B cell (primary cell): ENCODE measurements at regions of chr17 and their contacts with region 1.

Region 1: GRCh38 chr17:67800495-67800928 is 24.8 kb upstream of the BPTF start:
- DNase-seq: peak; percentile 87
- ATAC-seq: peak; percentile 94
- H3K4me3 ChIP-seq: no peak overlapping the region
- H3K4me3 Mint-ChIP-seq: peak overlapping the region; percentile 52
- H3K27ac ChIP-seq: no peak overlapping the region
- H3K27ac Mint-ChIP-seq: peak overlapping the region; percentile 80
- H3K4me1 ChIP-seq: peaks cover 9 to 11% of the 10 kb centered on the region in 2 donors
- H3K4me1 Mint-ChIP-seq: peaks cover 22% of the 10 kb centered on the region
- H3K27me3 ChIP-seq: no peaks in the 10 kb centered on the region
- H3K27me3 Mint-ChIP-seq: peaks cover 3% of the 10 kb centered on the region
- CTCF ChIP-seq: peak; percentile 73

Region 2: GRCh38 chr17:67546578-67547527 is 253.7 kb before region 1 on chr17:
- CTCF ChIA-PET with region 1: no interaction called
- POLR2A ChIA-PET with region 1: no interaction called
- intact Hi-C with region 1: no loop called
- DNase-seq: no peak
- ATAC-seq: no peak
- H3K4me3 ChIP-seq: no peak overlapping the region
- H3K4me3 Mint-ChIP-seq: no peak overlapping the region
- H3K27ac ChIP-seq: no peak overlapping the region
- H3K27ac Mint-ChIP-seq: peak overlapping the region; percentile 4
- H3K4me1 ChIP-seq: peaks cover 0 to 3% of the 10 kb centered on the region in 2 donors
- H3K4me1 Mint-ChIP-seq: peaks cover 15% of the 10 kb centered on the region
- H3K27me3 ChIP-seq: no peaks in the 10 kb centered on the region
- H3K27me3 Mint-ChIP-seq: no peaks in the 10 kb centered on the region
- CTCF ChIP-seq: no peak

Region 3: DNA sequence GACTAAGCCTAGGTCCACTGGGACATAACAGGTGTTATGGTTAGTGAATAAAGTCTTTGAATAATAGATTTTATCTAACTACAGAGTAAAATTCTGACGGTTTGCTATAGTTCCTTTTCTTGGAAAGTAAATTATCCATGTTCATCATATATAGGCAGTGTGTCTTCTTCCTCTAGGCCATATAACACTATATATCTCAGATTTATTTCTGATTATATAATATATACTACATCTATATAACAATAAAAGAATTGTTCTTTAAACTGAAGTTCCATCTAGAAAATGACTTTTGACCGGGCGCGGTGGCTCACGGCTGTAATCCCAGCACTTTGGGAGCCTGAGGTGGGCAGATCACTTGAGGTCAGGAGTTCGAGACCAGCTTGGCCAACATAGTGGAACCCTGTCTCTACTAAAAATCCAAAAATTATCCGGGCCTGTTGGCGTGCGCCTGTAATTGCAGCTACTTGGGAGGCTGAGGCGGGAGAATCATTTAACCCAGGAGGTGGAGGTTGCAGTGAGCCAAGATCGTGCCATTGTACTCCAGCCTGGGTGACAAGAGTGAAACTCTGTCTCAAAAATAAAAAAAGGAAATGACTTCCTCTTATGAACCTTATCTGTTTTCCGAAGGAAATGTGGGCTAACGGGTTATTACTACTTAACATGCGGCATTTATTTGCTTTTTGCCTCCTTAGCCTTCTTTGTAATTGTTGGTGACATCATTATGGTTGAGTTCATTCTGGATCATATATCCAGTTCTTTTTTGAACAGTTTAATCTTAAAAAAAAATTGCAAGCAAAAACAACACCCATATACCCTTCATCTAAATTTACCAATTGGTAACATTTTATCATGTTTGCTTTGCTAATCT is 53.6 kb before region 1 on chr17:
- CTCF ChIA-PET with region 1: no interaction called
- POLR2A ChIA-PET with region 1: no interaction called
- intact Hi-C with region 1: no loop called
- DNase-seq: no peak
- ATAC-seq: no peak
- H3K4me3 ChIP-seq: no peak overlapping the region
- H3K4me3 Mint-ChIP-seq: no peak overlapping the region
- H3K27ac ChIP-seq: peak overlapping the region in 1 of 2 donors; percentile 19
- H3K27ac Mint-ChIP-seq: no peak overlapping the region
- H3K4me1 ChIP-seq: no peaks in the 10 kb centered on the region
- H3K4me1 Mint-ChIP-seq: no peaks in the 10 kb centered on the region
- H3K27me3 ChIP-seq: no peaks in the 10 kb centered on the region
- H3K27me3 Mint-ChIP-seq: no peaks in the 10 kb centered on the region
- CTCF ChIP-seq: no peak

Region 4: GRCh38 chr17:67785504-67785903 is 15.0 kb before region 1 on chr17:
- CTCF ChIA-PET with region 1: no interaction called
- POLR2A ChIA-PET with region 1: no interaction called
- intact Hi-C with region 1: no loop called
- DNase-seq: no peak
- ATAC-seq: no peak
- H3K4me3 ChIP-seq: no peak overlapping the region
- H3K4me3 Mint-ChIP-seq: no peak overlapping the region
- H3K27ac ChIP-seq: no peak overlapping the region
- H3K27ac Mint-ChIP-seq: no peak overlapping the region
- H3K4me1 ChIP-seq: peaks cover 0 to 6% of the 10 kb centered on the region in 2 donors
- H3K4me1 Mint-ChIP-seq: peaks cover 4% of the 10 kb centered on the region
- H3K27me3 ChIP-seq: no peaks in the 10 kb centered on the region
- H3K27me3 Mint-ChIP-seq: peaks cover 4% of the 10 kb centered on the region
- CTCF ChIP-seq: no peak

Region 5: GRCh38 chr17:67818110-67819002 is 17.8 kb after region 1 on chr17:
- CTCF ChIA-PET with region 1: interaction called, 103 read pairs
- POLR2A ChIA-PET with region 1: interaction called, 25 read pairs
- intact Hi-C with region 1: loop called (anchors 1 kb)
- DNase-seq: peak; percentile 93
- ATAC-seq: peak; percentile 60
- H3K4me3 ChIP-seq: peak overlapping the region in 2 of 5 experiments; percentile 10 to 29
- H3K4me3 Mint-ChIP-seq: peak overlapping the region; percentile 73
- H3K27ac ChIP-seq: peak overlapping the region; percentile 71 to 78
- H3K27ac Mint-ChIP-seq: peak overlapping the region; percentile 92
- H3K4me1 ChIP-seq: peaks cover 56 to 73% of the 10 kb centered on the region in 2 donors
- H3K4me1 Mint-ChIP-seq: peaks cover 65% of the 10 kb centered on the region
- H3K27me3 ChIP-seq: no peaks in the 10 kb centered on the region
- H3K27me3 Mint-ChIP-seq: no peaks in the 10 kb centered on the region
- CTCF ChIP-seq: no peak

Region 6: DNA sequence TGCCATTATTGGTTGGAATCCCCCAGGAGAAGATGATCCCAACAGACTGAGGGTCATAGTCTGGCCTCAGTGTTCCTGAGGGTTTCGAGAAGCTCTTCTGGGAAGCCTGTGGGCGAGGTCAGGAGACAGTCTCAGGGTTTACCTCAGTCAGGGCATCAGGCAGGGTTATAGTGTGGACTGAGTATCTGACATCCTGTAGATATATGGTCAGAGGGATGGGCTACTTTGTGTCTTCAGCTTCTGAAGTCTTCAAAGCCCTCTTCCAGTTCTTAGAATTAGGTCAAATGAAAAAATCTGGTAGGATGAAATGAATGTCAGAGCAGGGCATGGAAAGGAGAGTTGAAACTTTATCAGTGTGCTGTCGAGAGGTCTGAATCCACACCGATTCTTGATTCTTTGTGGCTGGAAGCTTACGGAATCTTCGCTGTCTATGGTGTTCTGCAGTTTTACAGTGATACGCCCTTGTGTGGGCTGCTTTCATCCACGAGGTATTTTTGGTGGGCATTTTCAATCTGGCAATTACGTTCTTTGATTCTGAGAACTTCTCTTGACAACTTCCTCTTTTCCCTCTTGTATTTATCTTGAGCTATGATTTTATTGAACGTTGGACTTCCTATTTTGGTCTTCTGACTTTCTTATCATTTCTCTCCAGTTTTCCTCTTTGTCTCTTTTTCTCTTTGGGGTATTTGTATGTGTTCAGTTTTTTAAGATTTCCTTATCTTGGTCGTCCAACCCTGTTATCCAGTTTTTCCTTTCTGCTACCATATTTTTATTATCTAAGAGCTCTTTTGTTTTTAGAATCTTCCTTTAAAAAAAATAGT is 55.2 kb after region 1 on chr17:
- CTCF ChIA-PET with region 1: interaction called, 15 read pairs
- POLR2A ChIA-PET with region 1: interaction called, 6 read pairs
- intact Hi-C with region 1: no loop called
- DNase-seq: peak; percentile 74
- ATAC-seq: peak; percentile 69
- H3K4me3 ChIP-seq: peak overlapping the region in 4 of 5 experiments; percentile 11 to 50 (median 37)
- H3K4me3 Mint-ChIP-seq: peak overlapping the region; percentile 83
- H3K27ac ChIP-seq: peak overlapping the region; percentile 66 to 82
- H3K27ac Mint-ChIP-seq: peak overlapping the region; percentile 90
- H3K4me1 ChIP-seq: peaks cover 25% of the 10 kb centered on the region in 2 donors
- H3K4me1 Mint-ChIP-seq: peaks cover 57% of the 10 kb centered on the region
- H3K27me3 ChIP-seq: no peaks in the 10 kb centered on the region
- H3K27me3 Mint-ChIP-seq: no peaks in the 10 kb centered on the region
- CTCF ChIP-seq: no peak

Region 7: GRCh38 chr17:67862614-67863217 is 62.2 kb after region 1 on chr17:
- CTCF ChIA-PET with region 1: interaction called, 7 read pairs
- POLR2A ChIA-PET with region 1: no interaction called
- intact Hi-C with region 1: loop called (anchors 2 kb)
- DNase-seq: peak; percentile 23
- ATAC-seq: no peak
- H3K4me3 ChIP-seq: no peak overlapping the region
- H3K4me3 Mint-ChIP-seq: no peak overlapping the region
- H3K27ac ChIP-seq: peak overlapping the region in 1 of 2 donors; percentile 15
- H3K27ac Mint-ChIP-seq: no peak overlapping the region
- H3K4me1 ChIP-seq: peaks cover 3 to 5% of the 10 kb centered on the region in 2 donors
- H3K4me1 Mint-ChIP-seq: peaks cover 55% of the 10 kb centered on the region
- H3K27me3 ChIP-seq: no peaks in the 10 kb centered on the region
- H3K27me3 Mint-ChIP-seq: no peaks in the 10 kb centered on the region
- CTCF ChIP-seq: no peak

Region 8: DNA sequence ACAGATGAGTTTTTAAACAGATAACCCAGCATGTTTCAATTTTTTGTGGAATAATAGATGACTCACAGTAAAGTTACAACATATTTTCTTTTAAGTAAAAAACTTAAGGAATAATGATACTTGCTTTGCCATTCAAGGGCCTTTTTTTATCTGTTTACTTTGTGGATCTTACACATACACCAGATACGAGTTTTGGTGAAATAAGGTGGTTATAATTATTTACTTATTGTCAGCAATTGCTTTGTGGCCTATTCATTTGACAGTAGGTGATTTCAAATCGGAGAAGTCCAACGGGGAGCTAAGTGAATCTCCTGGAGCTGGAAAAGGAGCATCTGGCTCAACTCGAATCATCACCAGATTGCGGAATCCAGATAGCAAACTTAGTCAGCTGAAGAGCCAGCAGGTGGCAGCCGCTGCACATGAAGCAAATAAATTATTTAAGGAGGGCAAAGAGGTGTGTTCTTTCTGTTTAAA is 91.1 kb after region 1 on chr17:
- CTCF ChIA-PET with region 1: interaction called, 9 read pairs
- POLR2A ChIA-PET with region 1: no interaction called
- intact Hi-C with region 1: loop called (anchors 5 kb)
- DNase-seq: no peak
- ATAC-seq: no peak
- H3K4me3 ChIP-seq: no peak overlapping the region
- H3K4me3 Mint-ChIP-seq: no peak overlapping the region
- H3K27ac ChIP-seq: no peak overlapping the region
- H3K27ac Mint-ChIP-seq: no peak overlapping the region
- H3K4me1 ChIP-seq: peaks cover 0 to 3% of the 10 kb centered on the region in 2 donors
- H3K4me1 Mint-ChIP-seq: peaks cover 9% of the 10 kb centered on the region
- H3K27me3 ChIP-seq: no peaks in the 10 kb centered on the region
- H3K27me3 Mint-ChIP-seq: no peaks in the 10 kb centered on the region
- CTCF ChIP-seq: no peak

Region 9: GRCh38 chr17:67970815-67971214 is 170.3 kb after region 1 on chr17:
- CTCF ChIA-PET with region 1: no interaction called
- POLR2A ChIA-PET with region 1: no interaction called
- intact Hi-C with region 1: no loop called
- DNase-seq: no peak
- ATAC-seq: no peak
- H3K4me3 ChIP-seq: no peak overlapping the region
- H3K4me3 Mint-ChIP-seq: no peak overlapping the region
- H3K27ac ChIP-seq: no peak overlapping the region
- H3K27ac Mint-ChIP-seq: no peak overlapping the region
- H3K4me1 ChIP-seq: no peaks in the 10 kb centered on the region
- H3K4me1 Mint-ChIP-seq: no peaks in the 10 kb centered on the region
- H3K27me3 ChIP-seq: no peaks in the 10 kb centered on the region
- H3K27me3 Mint-ChIP-seq: no peaks in the 10 kb centered on the region
- CTCF ChIP-seq: no peak